CD4-positive, alpha-beta T cell (primary cell): ENCODE measurements at regions of chr16 and their contacts with region 1.

Region 1: DNA sequence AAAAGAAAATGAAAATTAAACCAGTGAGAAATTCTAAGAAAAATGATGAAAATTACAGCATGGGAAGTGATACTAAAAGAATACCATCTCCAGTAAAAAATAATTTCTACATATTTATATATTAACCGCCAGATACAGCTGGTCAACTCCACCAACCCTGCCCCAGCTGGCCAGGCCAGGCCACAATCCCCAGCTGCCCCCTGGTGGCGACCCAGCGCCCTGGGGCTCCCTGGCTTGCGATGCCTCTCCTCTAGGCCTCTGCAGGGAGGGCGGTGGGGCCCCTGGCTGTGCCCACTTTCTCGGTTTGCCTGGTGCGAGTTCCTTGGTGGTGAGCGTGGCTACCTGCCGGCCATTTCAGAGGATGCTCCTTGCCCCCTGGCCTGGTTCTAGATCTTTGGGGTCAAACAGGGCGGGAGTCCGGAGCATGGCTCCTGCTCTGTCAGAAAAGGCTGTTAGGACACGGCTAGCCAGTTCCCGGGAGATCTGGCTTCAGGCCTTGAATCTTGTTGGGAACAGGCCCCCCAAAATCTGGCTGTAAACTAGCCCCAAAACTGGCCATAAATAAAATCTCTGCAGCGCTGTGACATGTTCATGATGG is 14.5 kb downstream of the GLIS2 start:
- DNase-seq: peak; percentile 52 to 82 (median 65)
- ATAC-seq: peak; percentile 63
- H3K4me3 ChIP-seq: no peak overlapping the region
- H3K4me3 Mint-ChIP-seq: no peak overlapping the region
- H3K27ac ChIP-seq: no peak overlapping the region
- H3K27ac Mint-ChIP-seq: no peak overlapping the region
- H3K4me1 ChIP-seq: peaks cover 19% of the 10 kb centered on the region
- H3K4me1 Mint-ChIP-seq: no peaks in the 10 kb centered on the region
- H3K27me3 ChIP-seq: peaks cover 4 to 9% of the 10 kb centered on the region in 2 experiments
- H3K27me3 Mint-ChIP-seq: no peaks in the 10 kb centered on the region
- CTCF ChIP-seq: peak; percentile 91

Region 2: GRCh38 chr16:3938848-3939624 is 391.3 kb before region 1 on chr16:
- CTCF ChIA-PET with region 1: no interaction called
- POLR2A ChIA-PET with region 1: no interaction called
- intact Hi-C with region 1: loop called in 1 of 2 experiments (anchors 2 kb)
- DNase-seq: peak; percentile 42 to 82 (median 61)
- ATAC-seq: peak; percentile 84
- H3K4me3 ChIP-seq: peak overlapping the region; percentile 33
- H3K4me3 Mint-ChIP-seq: no peak overlapping the region
- H3K27ac ChIP-seq: no peak overlapping the region
- H3K27ac Mint-ChIP-seq: no peak overlapping the region
- H3K4me1 ChIP-seq: peaks cover 11% of the 10 kb centered on the region
- H3K4me1 Mint-ChIP-seq: no peaks in the 10 kb centered on the region
- H3K27me3 ChIP-seq: peaks cover 0 to 6% of the 10 kb centered on the region in 2 experiments
- H3K27me3 Mint-ChIP-seq: peaks cover 3% of the 10 kb centered on the region
- CTCF ChIP-seq: peak; percentile 96

Region 3: GRCh38 chr16:3983081-3983520 is 347.3 kb before region 1 on chr16:
- CTCF ChIA-PET with region 1: interaction called, 3 read pairs
- POLR2A ChIA-PET with region 1: no interaction called
- intact Hi-C with region 1: loop called in 1 of 2 experiments (anchors 2 kb)
- DNase-seq: peak in 12 of 14 experiments; percentile 12 to 72 (median 28)
- ATAC-seq: peak; percentile 76
- H3K4me3 ChIP-seq: no peak overlapping the region
- H3K4me3 Mint-ChIP-seq: no peak overlapping the region
- H3K27ac ChIP-seq: no peak overlapping the region
- H3K27ac Mint-ChIP-seq: no peak overlapping the region
- H3K4me1 ChIP-seq: peaks cover 6% of the 10 kb centered on the region
- H3K4me1 Mint-ChIP-seq: no peaks in the 10 kb centered on the region
- H3K27me3 ChIP-seq: no peaks in the 10 kb centered on the region
- H3K27me3 Mint-ChIP-seq: no peaks in the 10 kb centered on the region
- CTCF ChIP-seq: peak; percentile 36

Region 4: DNA sequence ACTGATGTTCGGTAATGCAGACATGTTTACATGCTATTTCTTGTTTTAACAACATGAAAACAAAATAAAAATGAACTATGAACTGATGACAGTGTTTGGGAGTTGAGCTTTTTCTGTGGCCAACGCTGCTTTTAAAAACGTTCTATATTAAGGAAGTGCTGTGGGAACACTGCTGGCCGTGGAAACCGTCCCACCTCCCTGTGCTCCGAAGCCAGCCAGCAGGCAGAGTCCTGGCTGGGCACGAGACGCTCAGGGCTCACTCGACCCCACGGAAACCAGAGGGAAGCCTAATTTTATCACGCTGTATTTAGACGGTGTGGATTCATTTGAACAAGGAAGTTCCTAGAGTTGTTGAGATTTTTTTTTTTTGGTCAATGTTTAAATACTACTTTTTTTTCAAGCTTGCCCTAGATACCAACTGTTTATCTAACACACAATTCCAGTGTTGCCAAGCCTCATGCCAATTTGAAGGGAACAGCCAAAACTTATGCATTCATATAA is 240.0 kb before region 1 on chr16:
- CTCF ChIA-PET with region 1: no interaction called
- POLR2A ChIA-PET with region 1: no interaction called
- intact Hi-C with region 1: no loop called
- DNase-seq: no peak
- ATAC-seq: no peak
- H3K4me3 ChIP-seq: no peak overlapping the region
- H3K4me3 Mint-ChIP-seq: no peak overlapping the region
- H3K27ac ChIP-seq: no peak overlapping the region
- H3K27ac Mint-ChIP-seq: no peak overlapping the region
- H3K4me1 ChIP-seq: no peaks in the 10 kb centered on the region
- H3K4me1 Mint-ChIP-seq: peaks cover 5% of the 10 kb centered on the region
- H3K27me3 ChIP-seq: no peaks in the 10 kb centered on the region
- H3K27me3 Mint-ChIP-seq: no peaks in the 10 kb centered on the region
- CTCF ChIP-seq: no peak

Region 5: GRCh38 chr16:4200000-4200780 is 130.2 kb before region 1 on chr16:
- CTCF ChIA-PET with region 1: no interaction called
- POLR2A ChIA-PET with region 1: no interaction called
- intact Hi-C with region 1: loop called in 1 of 2 experiments (anchors 2 kb)
- DNase-seq: peak in 11 of 14 experiments; percentile 5 to 57 (median 26)
- ATAC-seq: peak; percentile 56
- H3K4me3 ChIP-seq: no peak overlapping the region
- H3K4me3 Mint-ChIP-seq: no peak overlapping the region
- H3K27ac ChIP-seq: no peak overlapping the region
- H3K27ac Mint-ChIP-seq: no peak overlapping the region
- H3K4me1 ChIP-seq: peaks cover 7% of the 10 kb centered on the region
- H3K4me1 Mint-ChIP-seq: no peaks in the 10 kb centered on the region
- H3K27me3 ChIP-seq: peaks cover 0 to 7% of the 10 kb centered on the region in 2 experiments
- H3K27me3 Mint-ChIP-seq: peaks cover 9% of the 10 kb centered on the region
- CTCF ChIP-seq: no peak

Region 6: GRCh38 chr16:4307215-4308037 is 22.9 kb before region 1 on chr16:
- CTCF ChIA-PET with region 1: interaction called, 12 read pairs
- POLR2A ChIA-PET with region 1: interaction called, 9 read pairs
- intact Hi-C with region 1: loop called in 1 of 2 experiments (anchors 2 kb)
- DNase-seq: peak; percentile 91 to 99 (median 96)
- ATAC-seq: peak; percentile 87
- H3K4me3 ChIP-seq: peak overlapping the region; percentile 72
- H3K4me3 Mint-ChIP-seq: peak overlapping the region; percentile 84
- H3K27ac ChIP-seq: peak overlapping the region; percentile 82 to 90
- H3K27ac Mint-ChIP-seq: peak overlapping the region; percentile 96
- H3K4me1 ChIP-seq: peaks cover 31% of the 10 kb centered on the region
- H3K4me1 Mint-ChIP-seq: peaks cover 15% of the 10 kb centered on the region
- H3K27me3 ChIP-seq: no peaks in the 10 kb centered on the region
- H3K27me3 Mint-ChIP-seq: no peaks in the 10 kb centered on the region
- CTCF ChIP-seq: no peak